ENCODE measurements at regions of chr2 and their contacts with region 1.

Region 1: GRCh38 chr2:42494355-42495233 is 812 bp upstream of the KCNG3 start:
- DNase-seq: peak; percentile 59 to 93
- H3K4me3 ChIP-seq: peak overlapping the region; percentile 38
- CTCF ChIP-seq: peak in 1 of 3 donors; percentile 27
- POLR2A ChIP-seq: no peak

Region 2: GRCh38 chr2:42663106-42663780 is 168.6 kb after region 1 on chr2:
- intact Hi-C with region 1: loop called (anchors 10 kb)
- DNase-seq: peak; percentile 24 to 87
- H3K4me3 ChIP-seq: no peak overlapping the region
- CTCF ChIP-seq: peak in 1 of 3 donors; percentile 95
- POLR2A ChIP-seq: no peak

Measured in lower leg skin (tissue), 4 donors.